ENCODE measurements at regions of chr19 and their contacts with region 1.

Region 1: DNA sequence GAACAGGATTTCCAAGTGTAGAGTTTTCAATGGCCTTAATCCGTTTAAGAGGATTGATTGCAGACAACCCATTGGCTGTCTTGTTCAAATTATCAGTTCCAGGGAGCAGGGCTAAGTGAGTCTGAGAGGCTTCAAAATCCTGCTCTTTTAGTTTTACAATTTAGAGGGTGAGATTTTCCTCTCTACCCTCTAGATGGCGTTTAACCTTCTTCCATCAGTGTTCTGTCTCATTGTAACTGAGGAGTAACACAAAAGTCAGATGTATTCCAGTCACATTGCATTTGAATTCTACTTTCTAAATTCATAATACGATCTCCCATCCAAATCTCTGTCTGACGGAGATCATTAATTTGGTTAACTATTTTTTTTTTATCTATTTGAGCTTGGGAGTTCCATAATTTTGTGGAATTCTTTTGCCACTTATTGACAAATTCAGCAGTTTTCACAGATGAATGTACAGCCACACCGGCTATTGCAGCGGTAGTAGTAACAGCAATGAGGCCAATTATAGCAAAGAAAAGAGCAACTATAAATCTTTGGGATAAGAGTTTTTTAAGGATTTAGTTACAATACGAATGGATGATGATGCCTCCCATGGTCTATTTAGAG is 7.8 kb upstream of the C19orf84 start:
- DNase-seq: peak; percentile 55
- H3K4me3 ChIP-seq: no peak overlapping the region; a peak in 1 of 4 replicates
- H3K27ac ChIP-seq: no peak overlapping the region
- H3K4me1 ChIP-seq: peaks cover 8 to 9% of the 10 kb centered on the region in 2 experiments; a peak in 1 of 4 replicates
- H3K27me3 ChIP-seq: no peaks in the 10 kb centered on the region
- CTCF ChIP-seq: peak; percentile 66
- EP300 ChIP-seq: no peak
- RAD21 ChIP-seq: peak; percentile 56

Region 2: GRCh38 chr19:51386882-51387520 is 11.2 kb before region 1 on chr19:
- CTCF ChIA-PET with region 1: interaction called, 10 read pairs
- POLR2A ChIA-PET with region 1: no interaction called
- DNase-seq: no peak
- H3K4me3 ChIP-seq: no peak overlapping the region
- H3K27ac ChIP-seq: no peak overlapping the region
- H3K4me1 ChIP-seq: no peaks in the 10 kb centered on the region
- H3K27me3 ChIP-seq: no peaks in the 10 kb centered on the region
- CTCF ChIP-seq: no peak
- EP300 ChIP-seq: no peak
- RAD21 ChIP-seq: no peak

Measured in SK-N-SH (cell line).